A549 (cell line): ENCODE measurements at regions of chr15 and their contacts with region 1.

Region 1: DNA sequence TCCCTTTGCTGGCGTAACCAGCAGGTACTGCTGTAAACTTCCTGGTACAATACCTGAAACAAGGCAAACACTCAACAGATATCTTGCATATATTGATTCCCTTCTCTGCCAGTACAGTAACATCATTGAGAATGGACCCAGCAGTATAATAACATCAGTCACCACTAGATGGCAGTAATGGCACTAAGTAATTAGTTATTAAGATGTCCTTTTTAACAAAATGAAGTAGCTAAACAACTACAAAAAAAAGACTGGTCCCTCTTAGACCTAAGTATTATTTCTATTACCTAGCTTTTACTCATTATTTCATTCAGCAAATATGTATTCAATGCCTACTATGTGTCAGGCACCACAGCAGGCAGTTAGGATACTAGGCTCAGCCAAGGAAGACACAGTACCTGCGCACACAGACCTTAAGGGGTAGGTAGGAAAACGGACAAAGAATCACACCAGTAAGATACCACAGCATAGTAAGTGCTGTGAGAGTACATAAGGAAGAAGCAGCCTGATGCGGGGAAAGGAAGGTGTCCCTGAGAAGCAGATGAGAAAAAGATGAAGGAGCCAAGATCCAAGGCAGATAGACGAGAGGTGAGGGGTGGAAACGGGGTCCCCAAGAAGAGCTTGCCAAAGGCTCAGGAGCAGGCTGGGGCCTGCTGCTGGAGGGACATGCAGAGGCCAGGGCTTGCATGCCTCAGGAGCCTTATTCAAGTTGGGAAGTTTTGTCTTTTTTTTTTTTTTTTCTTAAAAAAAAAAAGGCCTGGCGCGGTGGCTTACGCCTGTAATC is 102.8 kb upstream of the CHD2 start:
- DNase-seq: peak; percentile 79 to 84
- ATAC-seq: peak; percentile 78 to 81
- H3K4me3 ChIP-seq: no peak overlapping the region
- H3K27ac ChIP-seq: peak overlapping the region; percentile 77 to 81
- H3K4me1 ChIP-seq: peaks cover 25% of the 10 kb centered on the region
- CTCF ChIP-seq: peak; percentile 96
- EP300 ChIP-seq: no peak
- POLR2A ChIP-seq: no peak
- RAD21 ChIP-seq: peak; percentile 88 to 91

Region 2: GRCh38 chr15:92429378-92430068 is 367.8 kb before region 1 on chr15:
- CTCF ChIA-PET with region 1: no interaction called
- POLR2A ChIA-PET with region 1: no interaction called
- DNase-seq: peak; percentile 72 to 81
- ATAC-seq: peak; percentile 89 to 90
- H3K4me3 ChIP-seq: no peak overlapping the region
- H3K27ac ChIP-seq: peak overlapping the region; percentile 66 to 85
- H3K4me1 ChIP-seq: peaks cover 19% of the 10 kb centered on the region
- CTCF ChIP-seq: no peak
- EP300 ChIP-seq: no peak
- POLR2A ChIP-seq: no peak
- RAD21 ChIP-seq: no peak

Region 3: GRCh38 chr15:92665100-92665555 is 132.2 kb before region 1 on chr15:
- CTCF ChIA-PET with region 1: no interaction called
- POLR2A ChIA-PET with region 1: no interaction called
- DNase-seq: no peak
- ATAC-seq: no peak
- H3K4me3 ChIP-seq: no peak overlapping the region
- H3K27ac ChIP-seq: no peak overlapping the region
- H3K4me1 ChIP-seq: peaks cover 42% of the 10 kb centered on the region
- CTCF ChIP-seq: no peak
- EP300 ChIP-seq: no peak
- POLR2A ChIP-seq: no peak
- RAD21 ChIP-seq: no peak

Region 4: GRCh38 chr15:92903941-92904831 is 106.8 kb after region 1 on chr15:
- CTCF ChIA-PET with region 1: interaction called, 29 read pairs
- POLR2A ChIA-PET with region 1: interaction called, 6 read pairs
- DNase-seq: peak; percentile 88 to 99
- ATAC-seq: peak; percentile 81 to 90
- H3K4me3 ChIP-seq: peak overlapping the region; percentile 57
- H3K27ac ChIP-seq: peak overlapping the region; percentile 94 to 95
- H3K4me1 ChIP-seq: peaks cover 41% of the 10 kb centered on the region
- CTCF ChIP-seq: no peak
- EP300 ChIP-seq: peak; percentile 52 to 70; a peak in 2 of 5 replicates
- POLR2A ChIP-seq: peak; percentile 70
- RAD21 ChIP-seq: peak in 1 of 2 experiments; percentile 38; a peak in 2 of 5 replicates

Region 5: GRCh38 chr15:92938387-92938786 is 141.0 kb after region 1 on chr15:
- CTCF ChIA-PET with region 1: interaction called, 13 read pairs
- POLR2A ChIA-PET with region 1: no interaction called
- DNase-seq: no peak
- ATAC-seq: peak in 1 of 2 experiments; percentile 54; a peak in 3 of 6 replicates
- H3K4me3 ChIP-seq: no peak overlapping the region
- H3K27ac ChIP-seq: no peak overlapping the region
- H3K4me1 ChIP-seq: no peaks in the 10 kb centered on the region
- CTCF ChIP-seq: no peak
- EP300 ChIP-seq: no peak
- POLR2A ChIP-seq: no peak
- RAD21 ChIP-seq: no peak

Region 6: GRCh38 chr15:93018580-93018979 is 221.2 kb after region 1 on chr15:
- CTCF ChIA-PET with region 1: interaction called, 41 read pairs
- POLR2A ChIA-PET with region 1: no interaction called
- DNase-seq: peak in 1 of 2 experiments; percentile 71
- ATAC-seq: peak; percentile 79
- H3K4me3 ChIP-seq: no peak overlapping the region
- H3K27ac ChIP-seq: no peak overlapping the region
- H3K4me1 ChIP-seq: no peaks in the 10 kb centered on the region
- CTCF ChIP-seq: peak; percentile 38
- EP300 ChIP-seq: no peak
- POLR2A ChIP-seq: no peak
- RAD21 ChIP-seq: peak; percentile 36 to 61; a peak in 3 of 5 replicates